GM12878 (cell line): ENCODE measurements at regions of chr2 and their contacts with region 1.

Region 1: GRCh38 chr2:17719562-17720371 is 33.8 kb downstream of the SMC6 start:
- DNase-seq: no peak
- ATAC-seq: peak; percentile 67
- H3K4me3 ChIP-seq: no peak overlapping the region
- H3K27ac ChIP-seq: no peak overlapping the region
- H3K4me1 ChIP-seq: no peaks in the 10 kb centered on the region
- H3K27me3 ChIP-seq: no peaks in the 10 kb centered on the region
- CTCF ChIP-seq: peak; percentile 59 to 78 (median 75)
- EP300 ChIP-seq: no peak
- POLR2A ChIP-seq: no peak
- RAD21 ChIP-seq: peak; percentile 74

Region 2: DNA sequence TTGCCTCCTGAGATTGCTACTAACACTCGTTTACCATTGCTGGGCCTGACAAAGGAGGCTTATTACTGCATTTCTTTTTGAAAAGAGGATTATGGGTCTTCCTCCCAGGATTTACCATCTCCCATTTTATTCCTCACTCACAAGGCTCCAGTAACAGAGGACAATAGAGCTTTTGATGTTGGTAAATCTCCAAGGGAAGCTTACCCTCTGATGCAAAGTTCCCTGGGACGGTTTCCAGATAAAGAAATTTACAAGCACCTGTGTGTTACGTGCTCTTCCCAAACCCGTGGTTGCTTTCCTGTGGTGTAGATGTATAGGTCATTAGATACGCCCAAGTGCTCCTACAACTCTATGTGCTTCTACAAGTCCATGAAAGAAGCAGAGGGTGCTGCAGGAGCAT is 162.2 kb before region 1 on chr2:
- CTCF ChIA-PET with region 1: no interaction called
- POLR2A ChIA-PET with region 1: no interaction called
- RAD21 ChIA-PET with region 1: no interaction called
- SMC1A ChIA-PET with region 1: no interaction called
- in situ Hi-C with region 1: no loop called
- intact Hi-C with region 1: no loop called
- DNase-seq: no peak
- ATAC-seq: no peak
- H3K4me3 ChIP-seq: no peak overlapping the region
- H3K27ac ChIP-seq: no peak overlapping the region
- H3K4me1 ChIP-seq: no peaks in the 10 kb centered on the region
- H3K27me3 ChIP-seq: no peaks in the 10 kb centered on the region; a peak in 1 of 4 replicates
- CTCF ChIP-seq: no peak
- EP300 ChIP-seq: no peak
- POLR2A ChIP-seq: no peak
- RAD21 ChIP-seq: no peak

Region 3: DNA sequence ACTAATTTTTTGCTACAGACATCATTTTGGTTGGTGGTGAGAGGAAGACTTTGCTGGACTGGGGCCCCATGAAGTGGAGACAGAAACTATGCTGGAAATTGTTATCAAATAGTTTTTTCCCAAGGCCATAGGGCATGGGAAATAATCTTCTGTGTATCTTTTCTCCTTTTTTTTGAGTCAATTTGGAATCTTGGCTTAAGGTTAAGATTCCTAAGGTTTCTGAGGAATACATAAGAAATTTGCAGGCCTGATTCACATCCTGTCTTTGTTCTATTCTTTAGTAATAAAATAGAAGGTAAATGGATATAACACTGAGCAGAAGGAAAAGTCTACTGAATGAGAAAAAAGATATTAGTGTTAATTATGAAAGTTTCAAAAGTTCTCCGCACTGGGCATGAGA is 17.2 kb after region 1 on chr2:
- CTCF ChIA-PET with region 1: interaction called, 32 read pairs
- POLR2A ChIA-PET with region 1: no interaction called
- RAD21 ChIA-PET with region 1: interaction called, 3 read pairs
- SMC1A ChIA-PET with region 1: interaction called, 20 read pairs
- in situ Hi-C with region 1: no loop called
- intact Hi-C with region 1: no loop called
- DNase-seq: no peak
- ATAC-seq: no peak
- H3K4me3 ChIP-seq: no peak overlapping the region
- H3K27ac ChIP-seq: no peak overlapping the region
- H3K4me1 ChIP-seq: no peaks in the 10 kb centered on the region
- H3K27me3 ChIP-seq: no peaks in the 10 kb centered on the region
- CTCF ChIP-seq: no peak
- EP300 ChIP-seq: no peak
- POLR2A ChIP-seq: no peak
- RAD21 ChIP-seq: no peak

Region 4: GRCh38 chr2:17759805-17760204 is 40.0 kb after region 1 on chr2:
- CTCF ChIA-PET with region 1: interaction called, 33 read pairs
- POLR2A ChIA-PET with region 1: interaction called, 3 read pairs
- RAD21 ChIA-PET with region 1: interaction called, 4 read pairs
- SMC1A ChIA-PET with region 1: interaction called, 17 read pairs
- in situ Hi-C with region 1: no loop called
- intact Hi-C with region 1: no loop called
- DNase-seq: no peak
- ATAC-seq: no peak
- H3K4me3 ChIP-seq: no peak overlapping the region
- H3K27ac ChIP-seq: no peak overlapping the region
- H3K4me1 ChIP-seq: 0 out of 2 replicates have a peak, but pooled peaks cover 3% of the 10 kb centered on the region
- H3K27me3 ChIP-seq: no peaks in the 10 kb centered on the region
- CTCF ChIP-seq: no peak
- EP300 ChIP-seq: no peak
- POLR2A ChIP-seq: no peak
- RAD21 ChIP-seq: no peak

Region 5: DNA sequence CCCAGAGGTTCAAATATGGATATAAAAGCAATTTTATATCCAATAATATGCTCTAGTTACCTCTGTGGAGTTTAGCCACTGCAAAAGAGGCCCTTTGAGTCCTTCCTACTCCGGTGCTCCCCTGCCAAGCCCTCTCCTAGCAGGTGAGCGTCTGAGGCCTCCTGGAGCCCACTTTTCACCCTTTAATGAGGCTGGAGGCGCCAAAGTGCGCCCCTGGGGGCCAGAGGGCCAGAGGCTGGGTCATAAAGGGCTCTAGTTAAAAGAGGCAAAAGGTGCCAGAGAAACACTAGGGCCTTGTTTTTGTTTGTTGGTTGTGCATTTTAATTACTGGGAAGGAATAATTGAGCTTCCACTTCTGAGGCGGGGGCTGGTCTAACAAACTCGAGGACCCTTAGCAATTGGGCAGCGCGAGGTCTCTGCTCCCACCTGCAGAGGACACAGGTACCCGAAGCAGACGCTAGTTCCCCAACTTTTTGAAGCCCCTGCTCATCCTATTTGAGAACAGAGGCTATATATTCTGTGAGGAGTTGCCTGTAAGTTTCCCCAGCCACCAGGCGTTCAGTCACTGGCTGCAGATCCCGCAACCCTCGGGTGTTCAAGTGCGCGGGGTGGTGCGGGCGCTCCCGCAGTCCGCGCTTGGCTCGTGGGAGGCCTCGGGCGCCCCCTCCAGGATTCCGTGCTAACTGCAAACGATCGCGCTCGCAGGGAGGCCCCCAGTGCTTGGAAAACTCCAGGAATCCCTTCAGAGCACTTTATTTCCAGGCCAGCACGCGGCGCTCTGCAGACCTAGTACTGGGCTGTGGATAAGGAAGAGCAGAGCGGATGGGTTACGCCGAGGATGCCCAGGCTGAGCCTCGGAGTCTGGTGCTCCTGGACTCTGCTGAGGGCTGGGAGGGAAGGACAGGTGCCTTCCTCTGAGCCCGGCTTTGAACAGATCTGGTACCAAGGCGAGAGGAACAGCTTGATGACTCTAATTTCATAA is 110.6 kb after region 1 on chr2:
- CTCF ChIA-PET with region 1: interaction called, 130 read pairs
- POLR2A ChIA-PET with region 1: interaction called, 3 read pairs
- RAD21 ChIA-PET with region 1: interaction called, 12 read pairs
- SMC1A ChIA-PET with region 1: interaction called, 86 read pairs
- in situ Hi-C with region 1: loop called (anchors 5 kb)
- intact Hi-C with region 1: loop called (anchors 1 kb)
- DNase-seq: no peak
- ATAC-seq: peak; percentile 95
- H3K4me3 ChIP-seq: peak overlapping the region; percentile 22; the same call in 1 of the 2 replicates
- H3K27ac ChIP-seq: no peak overlapping the region
- H3K4me1 ChIP-seq: peaks cover 4% of the 10 kb centered on the region; the same call in 1 of the 2 replicates
- H3K27me3 ChIP-seq: no peaks in the 10 kb centered on the region
- CTCF ChIP-seq: peak; percentile 85 to 93 (median 90)
- EP300 ChIP-seq: no peak
- POLR2A ChIP-seq: no peak
- RAD21 ChIP-seq: peak; percentile 88

Region 6: GRCh38 chr2:17845806-17846205 is 126.0 kb after region 1 on chr2:
- CTCF ChIA-PET with region 1: interaction called, 16 read pairs
- POLR2A ChIA-PET with region 1: no interaction called
- RAD21 ChIA-PET with region 1: interaction called, 5 read pairs
- SMC1A ChIA-PET with region 1: interaction called, 13 read pairs
- in situ Hi-C with region 1: no loop called
- intact Hi-C with region 1: no loop called
- DNase-seq: no peak
- ATAC-seq: no peak
- H3K4me3 ChIP-seq: no peak overlapping the region
- H3K27ac ChIP-seq: no peak overlapping the region
- H3K4me1 ChIP-seq: no peaks in the 10 kb centered on the region
- H3K27me3 ChIP-seq: 0 out of 4 replicates have a peak, but pooled peaks cover 0 to 4% of the 10 kb centered on the region in 2 experiments
- CTCF ChIP-seq: no peak
- EP300 ChIP-seq: no peak
- POLR2A ChIP-seq: no peak
- RAD21 ChIP-seq: no peak

Region 7: GRCh38 chr2:18178736-18179349 is 459.1 kb after region 1 on chr2:
- CTCF ChIA-PET with region 1: interaction called, 11 read pairs
- POLR2A ChIA-PET with region 1: no interaction called
- RAD21 ChIA-PET with region 1: no interaction called
- SMC1A ChIA-PET with region 1: interaction called, 7 read pairs
- in situ Hi-C with region 1: no loop called
- intact Hi-C with region 1: loop called (anchors 5 kb)
- DNase-seq: peak; percentile 13
- ATAC-seq: peak; percentile 97
- H3K4me3 ChIP-seq: no peak overlapping the region
- H3K27ac ChIP-seq: no peak overlapping the region
- H3K4me1 ChIP-seq: no peaks in the 10 kb centered on the region
- H3K27me3 ChIP-seq: no peaks in the 10 kb centered on the region
- CTCF ChIP-seq: peak; percentile 71 to 85 (median 83)
- EP300 ChIP-seq: no peak
- POLR2A ChIP-seq: no peak
- RAD21 ChIP-seq: peak; percentile 70